Heart left ventricle (tissue), 16 donors: ENCODE measurements at regions of chr13 and their contacts with region 1.

Region 1: GRCh38 chr13:102452831-102453230 is 51.0 kb upstream of the FGF14 start:
- DNase-seq: no peak
- ATAC-seq: no peak
- H3K4me3 ChIP-seq: no peak overlapping the region
- H3K27ac ChIP-seq: no peak overlapping the region
- H3K4me1 ChIP-seq: no peaks in the 10 kb centered on the region
- H3K27me3 ChIP-seq: no peaks in the 10 kb centered on the region
- CTCF ChIP-seq: no peak
- POLR2A ChIP-seq: no peak

Region 2: DNA sequence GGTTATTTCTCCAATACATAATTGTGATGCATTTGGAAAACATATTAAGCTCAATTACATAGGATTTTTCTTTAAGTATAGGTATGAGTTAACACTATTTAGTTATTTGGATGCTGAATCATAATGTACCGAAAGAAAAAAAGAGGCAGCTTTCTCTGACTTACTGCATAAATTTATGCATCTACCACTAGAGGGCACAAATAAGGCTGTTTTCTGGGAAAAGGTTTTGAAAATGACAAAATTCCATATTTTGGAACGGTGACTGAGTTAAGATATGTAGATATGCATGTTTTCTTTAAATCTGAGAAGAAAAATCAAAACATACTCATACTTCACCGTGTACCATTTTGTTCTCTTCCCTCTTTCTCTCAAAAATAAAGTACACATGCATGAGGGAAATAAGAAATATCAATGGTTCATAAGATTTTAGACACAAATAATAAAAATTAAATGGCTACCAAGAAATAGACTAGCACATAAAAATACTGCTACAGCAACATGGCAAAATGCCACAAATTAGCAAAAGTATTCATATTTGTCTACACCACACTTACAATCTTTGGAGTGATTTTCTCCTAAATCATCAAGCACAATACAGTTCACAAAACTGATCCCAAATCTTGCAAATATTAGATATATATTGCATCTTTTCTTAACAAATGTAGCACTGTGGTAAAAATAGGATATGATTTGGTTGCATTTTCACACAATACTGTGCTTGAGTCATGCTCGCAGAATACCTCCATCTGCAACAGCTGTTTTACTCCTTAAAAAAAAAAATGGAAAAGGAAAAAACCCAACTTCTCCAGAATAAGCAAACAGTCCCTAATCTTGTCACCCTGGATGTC is 311.0 kb before region 1 on chr13:
- intact Hi-C with region 1: loop called in 5 of 10 experiments (anchors 5 to 10 kb)
- DNase-seq: no peak
- ATAC-seq: peak in 1 of 4 donors; percentile 57
- H3K4me3 ChIP-seq: peak overlapping the region in 1 of 12 donors; percentile 2
- H3K27ac ChIP-seq: peak overlapping the region in 1 of 12 donors; percentile 24
- H3K4me1 ChIP-seq: peaks cover 0 to 17% (median 0%) of the 10 kb centered on the region in 12 donors
- H3K27me3 ChIP-seq: no peaks in the 10 kb centered on the region
- CTCF ChIP-seq: peak; percentile 49 to 80 (median 64)
- POLR2A ChIP-seq: no peak

Region 3: DNA sequence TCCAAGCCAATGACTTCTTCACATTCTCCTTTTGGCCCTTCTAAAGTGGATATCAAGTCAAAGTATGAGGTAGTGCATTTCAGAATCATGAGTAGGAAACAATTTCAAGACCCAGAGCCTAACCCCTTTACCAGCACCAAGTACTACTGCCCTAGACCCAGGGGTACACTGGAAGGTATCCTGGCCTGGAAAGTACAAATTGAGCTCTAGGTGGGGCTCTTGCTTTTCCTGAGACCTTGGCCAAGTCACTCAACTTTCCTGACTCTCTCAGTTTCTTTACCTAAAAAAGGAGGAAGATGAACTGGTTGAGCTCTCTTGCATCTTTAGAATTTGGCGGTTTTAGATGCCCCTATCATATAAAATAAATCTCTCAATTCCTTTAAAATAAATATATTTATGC is 255.6 kb before region 1 on chr13:
- intact Hi-C with region 1: loop called in 5 of 10 experiments (anchors 5 to 10 kb)
- DNase-seq: no peak
- ATAC-seq: peak in 2 of 4 donors; percentile 52 to 56
- H3K4me3 ChIP-seq: no peak overlapping the region
- H3K27ac ChIP-seq: no peak overlapping the region
- H3K4me1 ChIP-seq: peaks cover 0 to 1% (median 0%) of the 10 kb centered on the region in 12 donors
- H3K27me3 ChIP-seq: no peaks in the 10 kb centered on the region
- CTCF ChIP-seq: peak in 7 of 12 donors; percentile 12 to 43 (median 34)
- POLR2A ChIP-seq: no peak